BJ (cell line): ENCODE measurements at regions of chr5 and their contacts with region 1.

Region 1: GRCh38 chr5:134758504-134759341 is at the start of gene DDX46:
- DNase-seq: peak; percentile 55
- H3K4me3 ChIP-seq: peak within 1 kb of the TSS; percentile 82
- H3K27me3 ChIP-seq: no peaks in the 10 kb centered on the region
- CTCF ChIP-seq: peak; percentile 88
- polyA plus RNA-seq, gene DDX46: 19.4 and 27.2 TPM in 2 replicates

Region 2: GRCh38 chr5:134503088-134503946 is 255.4 kb before region 1 on chr5:
- CTCF ChIA-PET with region 1: no interaction called
- POLR2A ChIA-PET with region 1: no interaction called
- DNase-seq: peak; percentile 94
- H3K4me3 ChIP-seq: no peak overlapping the region
- H3K27me3 ChIP-seq: no peaks in the 10 kb centered on the region
- CTCF ChIP-seq: no peak

Region 3: GRCh38 chr5:134738133-134738962 is 20.4 kb before region 1 on chr5 and contains the start of gene CAMLG:
- CTCF ChIA-PET with region 1: interaction called, 29 read pairs
- POLR2A ChIA-PET with region 1: interaction called, 3 read pairs
- DNase-seq: peak; percentile 85
- H3K4me3 ChIP-seq: peak within 1 kb of the TSS; percentile 76
- H3K27me3 ChIP-seq: no peaks in the 10 kb centered on the region
- CTCF ChIP-seq: peak; percentile 67
- polyA plus RNA-seq, gene CAMLG: 16.6 and 16.9 TPM in 2 replicates

Region 4: GRCh38 chr5:134813407-134813806 is 54.7 kb after region 1 on chr5:
- CTCF ChIA-PET with region 1: no interaction called
- POLR2A ChIA-PET with region 1: no interaction called
- DNase-seq: no peak
- H3K4me3 ChIP-seq: no peak overlapping the region
- H3K27me3 ChIP-seq: no peaks in the 10 kb centered on the region
- CTCF ChIP-seq: no peak